Activated CD4-positive, alpha-beta T cell treated with anti-CD3 and anti-CD28 coated beads, Interleukin-2, amount 10 ng/mL, durations not matched to agents 24 days and 14 days (primary cell): ENCODE measurements at regions of chr9 and their contacts with region 1.

Region 1: DNA sequence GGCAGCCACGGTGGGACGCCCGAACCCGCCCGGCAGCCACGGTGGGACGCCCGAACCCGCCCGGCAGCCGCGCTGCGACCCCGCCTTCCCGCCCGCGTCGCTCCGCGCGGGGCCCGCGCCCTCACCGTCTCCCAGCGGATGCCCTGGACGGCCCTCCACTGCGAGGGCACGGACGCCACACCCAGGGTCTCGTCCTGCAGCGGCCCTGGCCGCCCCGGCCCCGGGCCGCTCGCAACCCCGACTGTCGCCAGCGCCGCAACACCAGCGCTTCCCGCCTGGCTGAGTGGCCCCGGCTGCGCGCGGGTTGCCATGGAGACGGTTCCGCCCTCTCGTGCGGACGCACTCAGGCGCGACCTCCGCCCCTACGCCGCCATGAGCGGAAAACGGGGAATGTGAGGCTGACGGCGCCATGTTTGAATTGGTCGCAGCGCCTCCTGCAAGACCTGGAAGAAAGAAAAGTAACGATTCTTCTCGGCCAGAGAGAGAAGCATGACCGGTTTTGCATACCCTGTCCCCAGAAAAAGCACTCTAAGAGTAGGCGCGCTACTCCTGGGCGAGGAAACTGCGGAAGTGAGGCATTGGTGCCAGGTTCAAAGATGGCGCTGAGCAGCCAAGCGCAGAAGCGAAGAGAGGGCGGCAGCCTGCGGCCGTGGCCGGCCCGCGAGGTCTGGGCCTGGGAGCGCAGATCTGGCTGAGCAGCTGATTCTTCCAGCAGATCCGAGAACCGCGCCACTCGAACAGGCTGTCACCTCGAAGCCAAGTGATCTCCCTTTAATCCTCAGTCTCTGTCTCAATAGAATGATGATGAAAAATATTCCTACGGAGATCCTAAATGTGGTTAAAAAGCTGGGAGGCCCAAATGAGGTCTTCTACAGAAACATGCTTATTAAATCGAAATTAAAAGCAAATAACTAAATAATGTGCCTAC is at the start of gene DYNC2I2:
- DNase-seq: peak; percentile 99
- H3K4me3 Mint-ChIP-seq: peak within 1 kb of the TSS; percentile 90
- H3K27ac Mint-ChIP-seq: peak within 1 kb of the TSS; percentile 100
- H3K4me1 Mint-ChIP-seq: peaks cover 10% of the 10 kb centered on the region
- H3K27me3 Mint-ChIP-seq: no peaks in the 10 kb centered on the region
- total RNA-seq, gene DYNC2I2: 47.4 and 47.7 TPM in 2 replicates

Region 2: GRCh38 chr9:128595471-128595870 is 61.2 kb before region 1 on chr9:
- intact Hi-C with region 1: no loop called
- DNase-seq: no peak
- H3K4me3 Mint-ChIP-seq: no peak overlapping the region
- H3K27ac Mint-ChIP-seq: no peak overlapping the region
- H3K4me1 Mint-ChIP-seq: peaks cover 2% of the 10 kb centered on the region
- H3K27me3 Mint-ChIP-seq: no peaks in the 10 kb centered on the region

Region 3: GRCh38 chr9:128702445-128702948 is 45.8 kb after region 1 on chr9 and contains the start of gene PKN3:
- intact Hi-C with region 1: loop called (anchors 5 kb)
- DNase-seq: peak; percentile 97
- H3K4me3 Mint-ChIP-seq: peak within 1 kb of the TSS; percentile 84
- H3K27ac Mint-ChIP-seq: peak within 1 kb of the TSS; percentile 80
- H3K4me1 Mint-ChIP-seq: peaks cover 8% of the 10 kb centered on the region
- H3K27me3 Mint-ChIP-seq: no peaks in the 10 kb centered on the region
- total RNA-seq, gene PKN3: 22.9 and 24.3 TPM in 2 replicates

Region 4: GRCh38 chr9:128716581-128717254 is 60.0 kb after region 1 on chr9:
- intact Hi-C with region 1: no loop called
- DNase-seq: no peak
- H3K4me3 Mint-ChIP-seq: no peak overlapping the region
- H3K27ac Mint-ChIP-seq: no peak overlapping the region
- H3K4me1 Mint-ChIP-seq: no peaks in the 10 kb centered on the region
- H3K27me3 Mint-ChIP-seq: no peaks in the 10 kb centered on the region